ENCODE measurements at regions of chr9 and their contacts with region 1.

Region 1: DNA sequence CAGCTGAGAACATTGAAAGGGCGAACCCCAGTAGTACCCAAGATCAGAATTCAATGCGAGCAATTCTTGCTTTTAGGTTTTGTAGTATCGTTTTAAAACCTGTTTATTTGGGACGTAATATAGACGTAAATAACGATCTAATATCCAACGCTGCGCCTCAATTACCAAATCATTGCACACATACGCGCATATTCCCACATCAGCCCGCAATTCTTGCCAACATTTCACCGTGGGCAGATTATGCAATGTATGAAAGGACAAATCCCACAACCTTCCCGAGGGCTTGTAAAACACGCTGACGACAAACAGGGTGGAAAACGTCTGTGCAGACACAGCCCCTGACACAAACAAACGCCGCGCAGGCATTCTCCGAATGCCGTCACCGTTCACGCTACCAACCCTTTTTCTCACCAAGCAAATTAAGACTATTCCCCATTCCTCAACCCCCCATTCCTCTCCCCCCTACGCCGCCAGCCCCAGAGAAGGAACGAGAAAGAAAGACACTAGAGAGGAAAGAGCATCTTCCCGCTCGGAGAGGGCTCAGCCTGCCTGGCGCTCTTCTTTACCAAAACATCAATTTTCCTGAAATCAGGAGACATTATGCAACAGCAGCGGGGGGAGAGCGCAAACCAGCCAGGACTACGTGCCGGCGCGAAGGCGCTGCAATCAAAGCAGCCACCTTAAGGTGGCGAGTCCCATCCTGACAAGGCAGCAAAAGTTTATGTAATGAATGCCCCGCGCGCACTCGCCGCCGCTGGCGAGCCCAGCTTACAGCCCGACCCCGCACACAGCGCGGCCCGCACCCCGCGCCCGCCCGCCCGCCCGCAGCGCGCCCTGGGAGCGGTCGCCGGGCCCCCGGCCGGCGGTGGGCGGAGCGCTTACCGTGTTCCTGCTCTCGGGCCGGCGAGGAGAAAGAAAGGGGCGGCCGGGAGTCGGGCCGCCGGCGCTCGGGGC is 597 bp downstream of the NFIL3 start:
- DNase-seq: peak; percentile 54 to 65
- ATAC-seq: peak in 6 of 8 donors; percentile 6 to 51 (median 33)
- H3K4me3 ChIP-seq: peak overlapping the region; percentile 48 to 83 (median 68)
- H3K27ac ChIP-seq: peak overlapping the region; percentile 85 to 96 (median 92)
- H3K4me1 ChIP-seq: peaks cover 0 to 73% (median 33%) of the 10 kb centered on the region in 9 donors
- H3K27me3 ChIP-seq: no peaks in the 10 kb centered on the region
- CTCF ChIP-seq: peak in 6 of 9 donors; percentile 8 to 44 (median 26)

Region 2: DNA sequence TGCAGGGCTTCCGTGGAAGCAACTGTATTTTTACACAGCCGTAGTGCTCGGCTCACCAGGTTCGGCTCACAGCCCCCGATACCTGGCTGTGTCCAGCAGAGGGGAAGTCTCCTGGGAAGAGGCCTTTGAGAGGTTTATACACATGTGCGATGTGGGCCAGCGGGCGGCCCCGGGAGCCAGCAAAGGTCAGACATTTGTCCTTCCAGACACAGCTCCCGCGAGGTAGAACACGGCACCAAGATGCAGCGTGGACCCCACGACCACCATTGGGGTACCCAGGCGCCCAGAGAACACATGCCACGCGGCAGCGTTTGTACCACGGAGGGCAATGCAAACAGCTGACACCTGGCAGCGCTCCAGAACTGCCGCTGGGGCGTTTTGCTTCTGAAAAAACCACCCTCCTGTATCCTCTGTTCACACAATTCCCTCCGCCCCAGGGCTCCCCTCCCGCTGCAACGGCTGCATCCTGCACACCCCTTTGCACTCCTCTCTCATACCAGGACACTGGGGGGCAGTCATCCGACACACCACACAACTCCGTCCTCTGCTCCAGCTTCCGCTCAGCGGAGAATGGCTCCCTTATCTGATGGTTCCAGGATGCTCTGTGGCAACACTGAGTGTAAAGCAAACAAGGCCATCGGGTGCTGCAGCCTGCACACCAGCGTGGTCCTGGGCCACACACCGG is 386.1 kb before region 1 on chr9:
- intact Hi-C with region 1: loop called in 5 of 10 experiments (anchors 1 to 5 kb)
- DNase-seq: peak; percentile 75 to 81
- ATAC-seq: peak; percentile 91 to 98 (median 96)
- H3K4me3 ChIP-seq: peak overlapping the region in 2 of 10 donors; percentile 25 to 29
- H3K27ac ChIP-seq: peak overlapping the region in 2 of 10 donors; percentile 10 to 74
- H3K4me1 ChIP-seq: peaks cover 6 to 20% (median 15%) of the 10 kb centered on the region in 9 donors
- H3K27me3 ChIP-seq: peaks cover 0 to 11% (median 0%) of the 10 kb centered on the region in 7 donors
- CTCF ChIP-seq: peak; percentile 41 to 83 (median 74)

Region 3: GRCh38 chr9:91193658-91194391 is 229.2 kb before region 1 on chr9:
- intact Hi-C with region 1: loop called in 8 of 10 experiments (anchors 1 to 10 kb)
- DNase-seq: peak; percentile 83 to 85
- ATAC-seq: peak; percentile 57 to 84 (median 74)
- H3K4me3 ChIP-seq: peak overlapping the region in 9 of 10 donors; percentile 28 to 60 (median 53)
- H3K27ac ChIP-seq: peak overlapping the region; percentile 90 to 100 (median 98)
- H3K4me1 ChIP-seq: peaks cover 0 to 72% (median 48%) of the 10 kb centered on the region in 9 donors
- H3K27me3 ChIP-seq: no peaks in the 10 kb centered on the region
- CTCF ChIP-seq: peak in 1 of 9 donors; percentile 29

Region 4: DNA sequence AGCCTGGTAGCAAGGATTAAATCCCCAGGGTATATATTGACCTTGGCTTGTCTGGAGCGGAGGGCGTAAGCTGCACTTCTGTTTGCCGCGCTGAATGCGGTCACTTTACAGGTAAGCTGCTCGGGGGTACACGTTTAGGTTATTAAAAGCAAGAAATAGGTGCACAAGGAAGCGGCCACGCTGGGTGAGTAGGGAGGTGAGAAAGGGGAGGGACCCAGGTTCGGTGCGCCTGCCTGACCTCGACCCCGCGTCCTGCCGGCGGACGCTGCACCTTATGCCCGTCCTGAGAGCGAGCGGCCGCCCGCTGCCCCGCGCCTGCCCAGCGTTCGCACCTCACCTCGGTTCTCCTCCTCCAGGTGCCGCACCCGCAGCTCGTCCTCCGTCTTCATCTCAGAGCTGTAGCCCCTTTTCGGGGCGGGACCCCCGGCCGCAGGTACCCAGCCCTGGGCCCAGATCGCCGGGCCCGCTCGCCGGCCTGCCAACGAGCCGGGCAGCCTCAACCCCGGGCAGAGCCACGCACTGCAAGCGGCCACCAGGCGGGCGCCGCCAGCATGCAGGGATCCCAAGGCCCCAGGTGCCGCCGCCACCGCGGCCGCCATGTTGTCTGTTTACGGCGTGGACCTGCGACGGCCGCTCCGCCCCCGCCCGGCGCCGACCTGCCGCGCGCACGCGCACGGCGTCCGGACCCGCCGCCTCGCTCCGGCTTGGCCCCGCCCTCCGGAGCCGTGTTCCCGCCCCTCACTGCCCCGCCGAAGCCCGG is 61.6 kb before region 1 on chr9 and contains the start of gene AUH:
- intact Hi-C with region 1: loop called in 5 of 10 experiments (anchors 2 to 5 kb)
- DNase-seq: peak; percentile 79 to 90
- ATAC-seq: peak; percentile 96 to 100 (median 98)
- H3K4me3 ChIP-seq: peak within 1 kb of the TSS; percentile 92 to 100 (median 98)
- H3K27ac ChIP-seq: peak within 1 kb of the TSS; percentile 85 to 97 (median 92)
- H3K4me1 ChIP-seq: peaks cover 0 to 43% (median 34%) of the 10 kb centered on the region in 9 donors
- H3K27me3 ChIP-seq: no peaks in the 10 kb centered on the region
- CTCF ChIP-seq: peak in 3 of 9 donors; percentile 7 to 17 (median 12)
- total RNA-seq, gene AUH: 30.6 to 51.3 (median 44.2) TPM

Region 5: DNA sequence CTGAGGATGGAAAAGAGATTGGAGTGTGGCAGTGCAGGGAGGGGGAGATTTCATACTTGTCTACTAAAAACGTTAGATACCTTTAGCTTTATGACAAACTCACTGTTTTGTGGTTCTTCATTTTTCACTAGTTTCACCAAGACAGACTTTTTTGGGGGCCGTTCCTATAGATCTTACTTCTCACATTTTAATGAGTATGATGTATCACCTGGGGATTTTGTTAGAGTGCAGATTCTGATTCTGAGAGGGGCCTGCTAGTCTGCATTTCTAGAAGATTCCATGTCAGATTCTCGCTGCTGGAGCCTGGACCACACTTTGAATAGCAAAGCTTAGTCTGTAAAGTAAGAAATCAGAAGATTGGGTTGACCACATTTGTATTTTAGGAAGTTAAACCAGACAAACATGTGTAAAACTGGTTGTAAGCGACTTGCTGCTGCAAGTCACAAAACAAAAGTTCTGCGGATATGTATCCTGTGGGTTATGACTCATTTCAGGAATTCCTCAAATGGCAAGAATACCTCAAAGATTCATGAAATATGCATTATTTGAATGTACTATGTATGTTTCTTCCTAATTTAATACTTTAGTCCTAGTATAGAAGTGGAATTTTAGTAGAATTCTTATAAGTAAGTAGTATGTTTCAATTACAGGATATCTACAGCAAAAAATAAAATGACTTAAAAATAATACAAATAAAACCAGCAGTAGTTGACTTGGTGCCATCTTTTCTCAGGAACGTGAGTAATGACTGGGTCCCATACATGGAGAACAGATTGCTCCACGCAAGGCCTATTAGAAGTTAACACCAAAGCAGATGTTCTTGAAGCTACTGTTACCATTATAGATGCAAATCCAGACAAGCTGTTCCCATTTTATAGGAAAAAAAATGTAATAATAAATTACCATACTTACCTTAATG is 27.2 kb before region 1 on chr9:
- intact Hi-C with region 1: no loop called
- DNase-seq: no peak
- ATAC-seq: no peak
- H3K4me3 ChIP-seq: no peak overlapping the region
- H3K27ac ChIP-seq: peak overlapping the region in 1 of 10 donors; percentile 33
- H3K4me1 ChIP-seq: peaks cover 0 to 24% (median 0%) of the 10 kb centered on the region in 9 donors
- H3K27me3 ChIP-seq: no peaks in the 10 kb centered on the region
- CTCF ChIP-seq: no peak

Region 6: DNA sequence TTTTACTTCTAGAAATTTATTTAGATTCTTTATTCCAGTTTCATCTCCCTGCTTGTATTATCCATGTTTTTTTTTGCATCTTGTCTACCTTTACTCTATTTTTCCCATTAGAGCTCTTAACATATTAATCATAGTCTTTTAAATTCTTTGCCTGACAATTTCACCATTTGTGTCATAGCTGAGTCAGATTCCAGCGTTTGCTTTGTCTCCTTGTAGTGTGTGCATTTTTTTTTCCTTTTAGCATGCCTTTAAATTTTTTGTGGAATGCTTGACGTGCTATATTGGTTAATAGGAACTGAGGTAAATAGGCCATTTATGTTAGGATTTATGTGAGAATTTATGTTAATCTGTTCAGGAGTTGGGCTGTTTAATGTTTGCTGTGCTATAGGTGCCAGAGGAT is 42.4 kb after region 1 on chr9:
- intact Hi-C with region 1: no loop called
- DNase-seq: no peak
- ATAC-seq: no peak
- H3K4me3 ChIP-seq: no peak overlapping the region
- H3K27ac ChIP-seq: no peak overlapping the region
- H3K4me1 ChIP-seq: no peaks in the 10 kb centered on the region
- H3K27me3 ChIP-seq: no peaks in the 10 kb centered on the region
- CTCF ChIP-seq: no peak

Region 7: GRCh38 chr9:91681461-91682305 is 258.6 kb after region 1 on chr9:
- intact Hi-C with region 1: loop called in 2 of 10 experiments (anchors 10 kb)
- DNase-seq: peak; percentile 68 to 81
- ATAC-seq: peak; percentile 90 to 97 (median 95)
- H3K4me3 ChIP-seq: peak overlapping the region in 4 of 10 donors; percentile 6 to 30 (median 24)
- H3K27ac ChIP-seq: no peak overlapping the region
- H3K4me1 ChIP-seq: peaks cover 0 to 9% (median 0%) of the 10 kb centered on the region in 9 donors
- H3K27me3 ChIP-seq: peaks cover 0 to 21% (median 3%) of the 10 kb centered on the region in 7 donors
- CTCF ChIP-seq: peak; percentile 64 to 94 (median 87)

Measured in heart right ventricle (tissue), 16 donors.